ENCODE measurements at regions of chr9 and their contacts with region 1.

Region 1: DNA sequence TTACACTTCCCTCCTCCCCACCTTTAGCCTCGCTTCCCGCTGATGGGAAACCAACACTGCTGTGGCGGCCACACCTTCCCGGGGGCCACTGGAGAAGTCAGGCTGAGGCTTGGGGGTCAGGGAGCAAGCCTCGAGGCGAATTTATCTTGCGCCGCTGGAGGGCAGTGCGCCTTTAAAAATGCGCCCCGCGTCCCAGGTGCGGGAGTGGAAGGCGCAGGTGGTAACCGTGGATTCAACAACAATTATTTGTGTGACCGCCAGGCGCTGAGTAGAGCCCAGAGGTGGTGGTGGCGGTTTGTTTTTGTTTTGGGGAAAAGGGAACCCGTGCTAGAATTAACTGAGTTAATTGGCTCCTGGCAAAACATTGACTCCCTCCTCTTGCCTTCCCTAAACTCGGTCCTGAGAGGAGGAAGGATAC is 1.1 kb downstream of the CFAP77 start:
- DNase-seq: no peak
- H3K4me3 ChIP-seq: peak overlapping the region; percentile 31 to 73 (median 43)
- H3K27ac ChIP-seq: no peak overlapping the region
- H3K4me1 ChIP-seq: peaks cover 19 to 40% (median 22%) of the 10 kb centered on the region in 3 donors
- H3K27me3 ChIP-seq: peaks cover 0 to 69% (median 13%) of the 10 kb centered on the region in 4 donors
- CTCF ChIP-seq: peak; percentile 40 to 75 (median 55)
- POLR2A ChIP-seq: no peak

Region 2: DNA sequence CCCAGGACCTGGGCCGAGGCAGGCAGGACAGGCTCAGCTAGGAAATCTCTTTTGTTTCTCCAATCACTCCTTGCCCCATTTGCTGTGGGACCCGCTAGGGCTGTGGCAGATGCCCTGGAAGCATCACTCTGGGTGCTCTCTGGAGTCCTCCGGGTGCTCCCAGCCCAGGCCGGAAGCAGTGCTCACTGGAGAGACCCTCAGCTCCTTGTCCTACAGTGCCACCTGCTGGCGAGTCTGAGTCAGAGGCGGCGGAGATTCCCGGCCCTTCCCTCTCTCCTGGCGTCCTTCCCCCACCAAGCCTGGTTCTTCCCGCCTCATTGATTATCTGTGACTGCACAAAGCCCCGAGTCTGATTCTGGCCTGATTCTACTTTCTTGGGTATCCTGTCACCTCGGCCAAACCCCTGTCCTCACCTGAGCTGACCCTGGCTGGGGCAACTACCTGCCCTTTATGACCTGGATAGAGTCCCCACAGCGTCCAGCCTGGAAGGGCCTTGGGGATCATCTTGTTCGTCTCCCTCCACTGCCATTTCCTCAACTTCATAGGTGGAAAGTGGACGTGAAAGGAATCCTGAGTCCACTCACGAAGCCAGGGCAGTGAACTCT is 164.0 kb after region 1 on chr9:
- intact Hi-C with region 1: loop called (anchors 10 kb)
- DNase-seq: no peak
- H3K4me3 ChIP-seq: no peak overlapping the region
- H3K27ac ChIP-seq: no peak overlapping the region
- H3K4me1 ChIP-seq: peaks cover 0 to 6% (median 0%) of the 10 kb centered on the region in 3 donors
- H3K27me3 ChIP-seq: peaks cover 0 to 94% (median 17%) of the 10 kb centered on the region in 4 donors
- CTCF ChIP-seq: peak; percentile 36 to 76 (median 63)
- POLR2A ChIP-seq: no peak

Measured in esophagus squamous epithelium (tissue), 5 donors.